Dendritic cell treated with granulocyte-macrophage colony-stimulating factor and Interleukin-4, amounts not matched to agents 40 ng/mL and 50 ng/mL, for 4 days (primary cell): ENCODE measurements at regions of chr11 and their contacts with region 1.

Region 1: GRCh38 chr11:85249482-85249881 is 377.7 kb downstream of the DLG2 start:
- H3K4me3 Mint-ChIP-seq: no peak overlapping the region
- H3K27ac Mint-ChIP-seq: no peak overlapping the region
- H3K4me1 Mint-ChIP-seq: no peaks in the 10 kb centered on the region
- H3K27me3 Mint-ChIP-seq: no peaks in the 10 kb centered on the region

Region 2: DNA sequence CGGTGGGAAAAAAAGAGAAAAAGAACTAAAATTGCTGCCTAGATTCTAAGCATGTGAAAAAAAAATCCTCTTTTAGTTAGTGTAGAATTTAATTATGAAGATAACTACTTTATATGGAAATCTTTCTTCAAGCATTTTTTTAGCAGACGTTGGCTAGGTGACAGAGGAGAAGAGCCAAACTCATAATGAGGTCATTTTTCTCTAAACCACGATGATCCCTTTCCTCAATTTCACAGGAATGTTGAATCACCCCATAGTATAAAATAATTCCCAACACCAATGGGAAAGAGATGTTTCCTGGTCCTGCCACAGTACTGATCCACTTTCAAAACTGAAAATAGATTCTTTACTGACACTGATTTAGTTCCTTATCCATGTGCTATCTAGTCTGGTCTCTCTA is 57.9 kb after region 1 on chr11:
- intact Hi-C with region 1: loop called (anchors 10 kb)
- H3K4me3 Mint-ChIP-seq: no peak overlapping the region
- H3K27ac Mint-ChIP-seq: no peak overlapping the region
- H3K4me1 Mint-ChIP-seq: no peaks in the 10 kb centered on the region
- H3K27me3 Mint-ChIP-seq: no peaks in the 10 kb centered on the region

Region 3: DNA sequence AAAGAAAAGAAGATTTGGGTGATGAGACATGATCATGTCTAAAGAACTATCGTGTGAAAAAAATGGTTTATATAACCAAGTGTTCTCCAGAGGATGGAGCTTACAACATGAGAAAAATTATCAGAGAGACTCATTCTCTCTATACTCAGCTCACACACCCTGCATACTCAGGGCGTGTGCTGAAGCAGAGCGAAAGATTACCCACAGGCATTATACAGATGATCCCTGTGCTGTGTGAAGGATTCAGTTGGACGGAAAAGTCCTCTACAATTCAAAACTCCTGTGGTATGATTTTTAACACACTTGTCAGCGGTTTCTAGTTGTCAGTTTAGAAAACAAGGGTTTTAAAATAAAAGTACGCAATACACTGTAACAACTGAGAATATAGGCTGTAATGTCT is 110.4 kb after region 1 on chr11:
- intact Hi-C with region 1: no loop called
- H3K4me3 Mint-ChIP-seq: no peak overlapping the region
- H3K27ac Mint-ChIP-seq: no peak overlapping the region
- H3K4me1 Mint-ChIP-seq: peaks cover 6% of the 10 kb centered on the region
- H3K27me3 Mint-ChIP-seq: no peaks in the 10 kb centered on the region